Activated CD4-positive, alpha-beta T cell treated with anti-CD3 and anti-CD28 coated beads for 36 hours (primary cell): ENCODE measurements at regions of chr5 and their contacts with region 1.

Region 1: DNA sequence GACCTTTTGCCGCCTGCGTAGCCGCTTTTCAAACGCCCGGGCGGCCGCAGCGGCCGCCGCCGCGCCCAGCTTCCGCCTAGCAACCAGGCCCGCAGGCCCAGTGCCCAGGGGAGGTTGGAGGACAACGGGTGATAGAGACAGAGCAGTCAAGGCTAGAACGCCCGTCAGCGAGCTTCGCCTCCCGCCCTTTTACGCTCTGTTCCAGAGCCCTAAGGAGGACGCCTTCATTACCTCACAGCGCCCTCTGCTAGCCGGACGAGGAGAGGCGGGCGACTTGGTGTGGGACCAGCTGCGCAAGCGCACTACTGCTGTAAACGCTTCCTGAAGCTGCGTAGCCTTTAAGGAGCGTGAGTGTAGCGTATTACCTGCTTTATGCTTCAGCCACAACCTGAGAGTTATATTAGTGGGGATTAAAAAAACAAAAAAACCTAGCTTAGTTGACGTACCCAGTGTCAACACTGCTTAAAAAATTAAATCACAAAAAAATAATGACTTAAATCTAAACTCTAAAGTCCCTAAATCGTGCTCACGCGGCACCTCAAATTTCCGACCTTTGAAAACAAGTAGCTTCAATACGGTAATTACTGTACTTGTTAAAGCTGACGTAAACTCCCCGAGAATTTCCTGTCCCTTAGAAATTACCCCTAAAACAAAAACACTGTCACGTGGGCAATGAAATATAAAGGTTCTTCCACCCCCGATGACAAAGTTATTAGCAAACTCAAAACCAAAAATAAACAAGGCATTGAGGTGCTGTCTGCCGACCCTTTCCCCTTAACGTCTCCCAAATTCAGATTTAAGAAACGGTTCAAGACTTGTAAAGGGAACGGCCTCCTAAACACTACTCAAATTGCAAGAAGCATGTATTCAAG is at the start of gene CEP120:
- DNase-seq: peak; percentile 98
- ATAC-seq: peak; percentile 97
- H3K4me3 Mint-ChIP-seq: no peak within 1 kb of the TSS
- H3K27ac Mint-ChIP-seq: no peak within 1 kb of the TSS
- H3K4me1 Mint-ChIP-seq: peaks cover 30% of the 10 kb centered on the region
- H3K27me3 Mint-ChIP-seq: no peaks in the 10 kb centered on the region
- total RNA-seq, gene CEP120: 29.5 to 32.5 TPM

Region 2: DNA sequence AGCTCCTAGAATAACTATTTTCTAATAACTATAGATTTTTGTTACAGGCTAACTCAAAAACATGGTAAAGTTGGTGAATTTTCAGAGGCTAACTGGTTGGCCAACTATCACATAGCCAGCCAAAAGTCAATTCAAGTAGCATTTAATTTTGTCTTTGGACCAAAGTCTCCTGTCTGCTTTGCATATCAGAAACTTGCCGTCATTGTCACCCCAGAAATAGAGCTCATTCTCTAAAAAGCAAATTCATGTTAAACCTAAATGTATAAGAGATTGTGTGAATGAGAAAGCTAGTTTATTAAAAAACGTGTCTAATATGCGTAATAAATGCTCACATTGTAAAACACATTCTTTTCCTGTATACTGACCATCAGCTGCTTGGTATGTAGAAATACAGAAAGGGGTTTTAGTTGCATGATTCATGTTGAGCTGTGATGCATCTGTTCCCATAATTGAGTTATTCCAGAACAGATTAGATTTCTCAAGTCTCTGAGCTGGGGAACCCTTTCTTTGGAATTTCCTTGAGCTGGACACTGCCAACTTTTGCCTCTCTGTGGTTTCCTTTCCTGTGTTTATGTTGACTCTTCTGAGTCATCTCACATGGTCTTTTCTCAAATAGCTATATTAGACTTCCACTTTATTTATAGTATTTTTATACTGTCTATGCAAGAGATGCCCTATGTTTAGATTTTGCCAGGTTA is 1454.5 kb before region 1 on chr5:
- CTCF ChIA-PET with region 1: no interaction called
- POLR2A ChIA-PET with region 1: no interaction called
- intact Hi-C with region 1: loop called in 1 of 2 experiments (anchors 10 kb)
- DNase-seq: no peak
- ATAC-seq: no peak
- H3K4me3 Mint-ChIP-seq: no peak overlapping the region
- H3K27ac Mint-ChIP-seq: no peak overlapping the region
- H3K4me1 Mint-ChIP-seq: peaks cover 39% of the 10 kb centered on the region
- H3K27me3 Mint-ChIP-seq: no peaks in the 10 kb centered on the region

Region 3: GRCh38 chr5:123412206-123412605 is 11.3 kb before region 1 on chr5:
- CTCF ChIA-PET with region 1: interaction called, 11 read pairs
- POLR2A ChIA-PET with region 1: interaction called, 3 read pairs
- intact Hi-C with region 1: no loop called
- DNase-seq: no peak
- ATAC-seq: peak; percentile 49
- H3K4me3 Mint-ChIP-seq: no peak overlapping the region
- H3K27ac Mint-ChIP-seq: no peak overlapping the region
- H3K4me1 Mint-ChIP-seq: peaks cover 25% of the 10 kb centered on the region
- H3K27me3 Mint-ChIP-seq: no peaks in the 10 kb centered on the region

Region 4: DNA sequence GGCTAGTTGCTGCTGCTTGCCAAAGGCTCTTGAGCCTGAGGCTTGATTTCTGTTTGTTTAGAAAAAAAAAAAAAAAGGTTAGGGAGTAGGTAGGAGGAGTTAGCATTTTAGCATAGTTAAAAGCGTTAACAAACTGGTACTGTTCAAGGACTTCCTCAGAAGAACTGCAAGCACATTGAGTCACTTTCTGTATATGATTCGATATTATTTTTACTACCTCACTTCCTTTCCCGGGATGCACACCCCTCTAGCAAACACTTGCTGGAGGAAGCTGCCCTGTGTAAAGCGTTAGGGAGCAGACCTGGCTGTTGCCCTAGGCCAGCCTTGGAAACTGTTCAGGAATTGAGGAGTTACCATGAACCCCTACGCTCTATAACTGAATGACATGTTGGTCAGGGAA is 15.4 kb after region 1 on chr5:
- CTCF ChIA-PET with region 1: interaction called, 23 read pairs
- POLR2A ChIA-PET with region 1: interaction called, 25 read pairs
- intact Hi-C with region 1: loop called (anchors 1 kb)
- DNase-seq: peak; percentile 58
- ATAC-seq: peak; percentile 76
- H3K4me3 Mint-ChIP-seq: peak overlapping the region; percentile 24
- H3K27ac Mint-ChIP-seq: peak overlapping the region; percentile 83
- H3K4me1 Mint-ChIP-seq: peaks cover 32% of the 10 kb centered on the region
- H3K27me3 Mint-ChIP-seq: peaks cover 2% of the 10 kb centered on the region

Region 5: DNA sequence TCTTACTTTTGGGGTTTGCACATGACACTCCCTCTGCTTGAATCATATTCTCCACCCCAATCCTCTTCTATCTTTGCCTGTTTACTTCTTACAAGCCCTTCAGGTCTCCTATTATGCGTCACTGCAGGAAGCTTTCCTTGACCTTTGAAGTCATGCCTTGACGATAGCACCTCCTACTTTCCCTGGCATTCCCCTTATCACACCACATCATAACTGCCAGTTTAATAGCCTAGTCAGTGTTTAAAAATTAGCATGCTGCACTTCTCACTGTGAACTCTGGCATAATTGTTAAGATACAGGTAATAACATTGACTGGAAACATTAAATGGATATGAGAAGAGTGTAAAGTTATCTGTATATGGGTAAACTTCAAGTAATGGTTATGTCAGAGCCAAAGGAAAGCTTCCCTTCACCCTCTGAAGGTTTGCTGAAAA is 36.8 kb after region 1 on chr5:
- CTCF ChIA-PET with region 1: interaction called, 14 read pairs
- POLR2A ChIA-PET with region 1: interaction called, 5 read pairs
- intact Hi-C with region 1: loop called (anchors 1 kb)
- DNase-seq: peak; percentile 61
- ATAC-seq: peak; percentile 97
- H3K4me3 Mint-ChIP-seq: no peak overlapping the region
- H3K27ac Mint-ChIP-seq: peak overlapping the region; percentile 90
- H3K4me1 Mint-ChIP-seq: peaks cover 17% of the 10 kb centered on the region
- H3K27me3 Mint-ChIP-seq: no peaks in the 10 kb centered on the region

Region 6: DNA sequence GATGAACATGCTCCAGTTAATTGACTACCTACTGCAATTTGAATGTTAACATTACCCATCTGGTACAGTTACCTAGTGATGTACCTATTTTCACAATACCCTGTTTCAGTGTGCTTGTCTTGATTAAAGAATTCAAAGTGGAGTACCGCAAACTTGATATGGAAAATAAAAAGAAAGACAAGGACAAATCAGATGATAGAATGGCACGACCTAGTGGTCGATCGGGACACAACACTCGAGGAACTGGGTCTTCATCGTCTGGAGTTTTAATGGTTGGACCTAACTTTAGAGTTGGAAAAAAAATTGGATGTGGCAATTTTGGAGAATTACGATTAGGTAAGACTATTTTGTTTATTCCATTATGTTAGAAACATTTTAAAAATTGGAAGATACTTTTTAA is 122.0 kb after region 1 on chr5:
- CTCF ChIA-PET with region 1: interaction called, 9 read pairs
- POLR2A ChIA-PET with region 1: no interaction called
- intact Hi-C with region 1: loop called (anchors 1 to 2 kb)
- DNase-seq: peak; percentile 50
- ATAC-seq: no peak
- H3K4me3 Mint-ChIP-seq: no peak overlapping the region
- H3K27ac Mint-ChIP-seq: no peak overlapping the region
- H3K4me1 Mint-ChIP-seq: peaks cover 49% of the 10 kb centered on the region
- H3K27me3 Mint-ChIP-seq: no peaks in the 10 kb centered on the region